ENCODE measurements at regions of chr12 and their contacts with region 1.

Region 1: DNA sequence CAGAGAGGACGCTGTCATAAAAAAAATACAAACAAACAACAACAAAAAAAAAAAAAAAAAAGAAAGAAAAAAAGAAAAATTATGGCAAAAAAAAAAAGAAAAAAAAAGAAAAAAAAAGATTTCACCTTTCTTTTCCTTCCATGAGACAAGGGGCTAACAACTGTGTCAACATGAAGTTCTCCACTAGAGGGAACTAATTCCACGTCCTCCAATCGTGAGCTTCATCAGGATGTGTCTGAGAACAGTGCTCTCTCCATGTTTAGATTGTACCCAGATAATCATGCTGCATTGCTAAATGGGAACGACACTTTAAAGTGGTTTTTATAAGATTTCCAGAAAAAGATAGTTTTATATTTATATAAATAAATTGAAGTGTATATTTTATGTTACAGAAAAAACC is 96.2 kb upstream of the PTPRB start:
- DNase-seq: no peak
- H3K4me3 ChIP-seq: no peak overlapping the region
- H3K27ac ChIP-seq: no peak overlapping the region
- H3K4me1 ChIP-seq: no peaks in the 10 kb centered on the region
- H3K27me3 ChIP-seq: no peaks in the 10 kb centered on the region
- CTCF ChIP-seq: peak in 1 of 3 donors; percentile 38
- EP300 ChIP-seq: no peak
- POLR2A ChIP-seq: no peak

Region 2: DNA sequence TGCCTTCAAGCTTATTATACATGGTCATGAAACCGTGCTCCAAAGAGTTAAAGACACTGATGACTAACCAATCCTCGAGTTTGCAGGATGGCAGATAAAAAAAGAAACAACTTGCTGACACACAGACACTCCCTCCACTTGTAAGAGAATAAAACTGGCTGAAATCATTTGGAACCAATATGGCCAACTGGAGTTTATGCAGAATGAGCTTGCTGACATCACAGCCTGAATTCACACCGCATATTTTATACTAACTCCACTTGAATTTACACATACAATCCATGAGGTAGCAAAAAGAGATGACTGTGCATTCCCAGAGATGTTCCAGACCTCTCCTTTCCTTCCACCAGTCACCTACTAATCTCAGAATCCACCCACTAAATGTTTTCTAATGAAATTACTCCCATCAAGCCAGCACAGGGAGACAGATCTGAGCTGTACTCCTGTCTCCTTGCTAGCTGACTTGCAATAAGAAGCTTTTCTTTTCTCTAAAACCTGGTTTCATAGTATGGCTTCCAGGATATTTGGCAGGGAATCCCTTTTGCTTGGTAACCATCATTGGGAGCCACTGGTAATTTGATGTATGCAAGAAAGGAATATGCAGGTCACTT is 202.9 kb after region 1 on chr12:
- intact Hi-C with region 1: no loop called
- DNase-seq: no peak
- H3K4me3 ChIP-seq: no peak overlapping the region
- H3K27ac ChIP-seq: no peak overlapping the region
- H3K4me1 ChIP-seq: no peaks in the 10 kb centered on the region
- H3K27me3 ChIP-seq: no peaks in the 10 kb centered on the region
- CTCF ChIP-seq: no peak
- EP300 ChIP-seq: no peak
- POLR2A ChIP-seq: no peak

Region 3: GRCh38 chr12:71014180-71014785 is 280.9 kb after region 1 on chr12:
- intact Hi-C with region 1: loop called in 2 of 4 experiments (anchors 10 kb)
- DNase-seq: no peak
- H3K4me3 ChIP-seq: no peak overlapping the region
- H3K27ac ChIP-seq: no peak overlapping the region
- H3K4me1 ChIP-seq: no peaks in the 10 kb centered on the region
- H3K27me3 ChIP-seq: no peaks in the 10 kb centered on the region
- CTCF ChIP-seq: peak in 2 of 3 donors; percentile 45 to 67
- EP300 ChIP-seq: no peak
- POLR2A ChIP-seq: no peak